ENCODE measurements at regions of chr2 and their contacts with region 1.

Region 1: GRCh38 chr2:70142590-70143313 is 48.1 kb downstream of the C2orf42 start:
- DNase-seq: peak; percentile 100
- H3K4me3 Mint-ChIP-seq: peak overlapping the region; percentile 93
- H3K27ac Mint-ChIP-seq: peak overlapping the region; percentile 99
- H3K4me1 Mint-ChIP-seq: peaks cover 53% of the 10 kb centered on the region
- H3K27me3 Mint-ChIP-seq: no peaks in the 10 kb centered on the region

Region 2: GRCh38 chr2:69601179-69601612 is 541.6 kb before region 1 on chr2:
- CTCF ChIA-PET with region 1: no interaction called
- intact Hi-C with region 1: no loop called
- DNase-seq: peak; percentile 24
- H3K4me3 Mint-ChIP-seq: no peak overlapping the region
- H3K27ac Mint-ChIP-seq: peak overlapping the region; percentile 79
- H3K4me1 Mint-ChIP-seq: peaks cover 92% of the 10 kb centered on the region
- H3K27me3 Mint-ChIP-seq: no peaks in the 10 kb centered on the region

Region 3: GRCh38 chr2:69724540-69725159 is 418.1 kb before region 1 on chr2:
- CTCF ChIA-PET with region 1: interaction called, 3 read pairs
- intact Hi-C with region 1: loop called (anchors 1 kb)
- DNase-seq: peak; percentile 95
- H3K4me3 Mint-ChIP-seq: peak overlapping the region; percentile 61
- H3K27ac Mint-ChIP-seq: no peak overlapping the region
- H3K4me1 Mint-ChIP-seq: no peaks in the 10 kb centered on the region
- H3K27me3 Mint-ChIP-seq: no peaks in the 10 kb centered on the region

Region 4: GRCh38 chr2:69914170-69914960 is 228.4 kb before region 1 on chr2:
- CTCF ChIA-PET with region 1: interaction called, 80 read pairs
- intact Hi-C with region 1: loop called (anchors 1 kb)
- DNase-seq: peak; percentile 100
- H3K4me3 Mint-ChIP-seq: peak overlapping the region; percentile 83
- H3K27ac Mint-ChIP-seq: peak overlapping the region; percentile 87
- H3K4me1 Mint-ChIP-seq: peaks cover 36% of the 10 kb centered on the region
- H3K27me3 Mint-ChIP-seq: no peaks in the 10 kb centered on the region

Region 5: GRCh38 chr2:70070541-70071268 is 72.0 kb before region 1 on chr2:
- CTCF ChIA-PET with region 1: interaction called, 14 read pairs
- intact Hi-C with region 1: loop called (anchors 1 kb)
- DNase-seq: peak; percentile 76
- H3K4me3 Mint-ChIP-seq: peak overlapping the region; percentile 54
- H3K27ac Mint-ChIP-seq: peak overlapping the region; percentile 94
- H3K4me1 Mint-ChIP-seq: peaks cover 57% of the 10 kb centered on the region
- H3K27me3 Mint-ChIP-seq: no peaks in the 10 kb centered on the region

Region 6: DNA sequence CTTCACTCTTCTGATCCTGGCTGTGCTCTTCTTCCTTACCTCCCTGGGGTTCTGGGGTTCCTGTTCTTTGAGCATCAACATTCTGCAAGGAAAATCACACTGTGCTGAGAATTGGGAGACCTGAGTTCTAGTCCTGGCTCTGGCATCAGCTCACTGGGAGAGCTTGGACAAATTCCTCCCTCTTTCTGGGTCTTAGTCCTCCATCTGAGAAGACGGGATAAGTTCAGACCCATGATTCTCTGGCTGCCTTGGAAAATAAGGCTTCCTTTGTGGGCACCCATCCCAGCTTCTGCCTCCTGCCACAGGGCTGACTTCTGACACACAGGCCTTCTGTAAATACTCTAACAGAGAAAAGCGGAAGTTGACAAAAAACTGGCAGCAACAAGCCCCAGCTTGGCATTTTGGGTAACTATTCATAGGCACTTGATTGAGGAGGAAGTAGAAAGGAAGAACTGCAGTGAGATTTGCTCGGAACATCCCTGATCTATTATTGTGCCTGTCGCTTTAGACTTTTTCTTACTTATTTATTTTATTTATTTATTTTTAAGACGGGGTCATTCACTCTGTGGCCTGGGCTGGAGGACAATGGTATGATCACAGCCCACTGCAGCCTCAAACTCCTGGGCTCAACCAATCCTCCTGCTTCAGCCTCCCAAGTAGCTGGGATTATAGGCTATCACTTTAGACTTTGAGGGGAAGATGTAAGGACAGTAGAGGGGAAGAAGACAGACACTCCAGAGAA is 47.6 kb before region 1 on chr2:
- CTCF ChIA-PET with region 1: interaction called, 12 read pairs
- intact Hi-C with region 1: no loop called
- DNase-seq: peak; percentile 75
- H3K4me3 Mint-ChIP-seq: peak overlapping the region; percentile 77
- H3K27ac Mint-ChIP-seq: peak overlapping the region; percentile 98
- H3K4me1 Mint-ChIP-seq: peaks cover 65% of the 10 kb centered on the region
- H3K27me3 Mint-ChIP-seq: no peaks in the 10 kb centered on the region

Region 7: DNA sequence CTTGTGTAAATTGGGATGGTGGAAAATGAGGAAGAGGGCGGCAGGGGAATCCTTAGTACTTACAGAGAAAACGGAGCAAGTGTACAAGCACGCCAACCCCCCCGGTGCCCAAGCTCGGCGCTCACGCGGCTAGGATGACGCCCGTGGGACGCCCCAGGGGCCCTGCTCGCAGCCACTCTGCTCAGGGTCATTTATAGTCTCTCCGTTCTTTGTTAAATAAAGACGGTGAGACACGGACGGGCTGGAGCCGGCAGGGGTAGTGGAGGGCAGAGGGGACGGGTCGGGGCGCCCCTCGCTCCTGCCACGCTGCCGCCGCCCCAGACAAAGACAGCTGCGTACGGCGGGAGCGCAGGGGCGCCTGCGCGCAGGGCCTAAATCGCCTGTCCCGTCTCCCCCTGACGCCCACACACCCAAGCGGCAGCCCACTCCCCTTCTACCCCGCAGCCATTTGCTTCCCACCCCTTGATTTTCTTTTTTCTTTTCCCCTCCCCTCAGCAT is 17.7 kb before region 1 on chr2:
- CTCF ChIA-PET with region 1: interaction called, 6 read pairs
- intact Hi-C with region 1: loop called (anchors 1 kb)
- DNase-seq: peak; percentile 58
- H3K4me3 Mint-ChIP-seq: peak overlapping the region; percentile 92
- H3K27ac Mint-ChIP-seq: peak overlapping the region; percentile 100
- H3K4me1 Mint-ChIP-seq: peaks cover 68% of the 10 kb centered on the region
- H3K27me3 Mint-ChIP-seq: no peaks in the 10 kb centered on the region

Region 8: DNA sequence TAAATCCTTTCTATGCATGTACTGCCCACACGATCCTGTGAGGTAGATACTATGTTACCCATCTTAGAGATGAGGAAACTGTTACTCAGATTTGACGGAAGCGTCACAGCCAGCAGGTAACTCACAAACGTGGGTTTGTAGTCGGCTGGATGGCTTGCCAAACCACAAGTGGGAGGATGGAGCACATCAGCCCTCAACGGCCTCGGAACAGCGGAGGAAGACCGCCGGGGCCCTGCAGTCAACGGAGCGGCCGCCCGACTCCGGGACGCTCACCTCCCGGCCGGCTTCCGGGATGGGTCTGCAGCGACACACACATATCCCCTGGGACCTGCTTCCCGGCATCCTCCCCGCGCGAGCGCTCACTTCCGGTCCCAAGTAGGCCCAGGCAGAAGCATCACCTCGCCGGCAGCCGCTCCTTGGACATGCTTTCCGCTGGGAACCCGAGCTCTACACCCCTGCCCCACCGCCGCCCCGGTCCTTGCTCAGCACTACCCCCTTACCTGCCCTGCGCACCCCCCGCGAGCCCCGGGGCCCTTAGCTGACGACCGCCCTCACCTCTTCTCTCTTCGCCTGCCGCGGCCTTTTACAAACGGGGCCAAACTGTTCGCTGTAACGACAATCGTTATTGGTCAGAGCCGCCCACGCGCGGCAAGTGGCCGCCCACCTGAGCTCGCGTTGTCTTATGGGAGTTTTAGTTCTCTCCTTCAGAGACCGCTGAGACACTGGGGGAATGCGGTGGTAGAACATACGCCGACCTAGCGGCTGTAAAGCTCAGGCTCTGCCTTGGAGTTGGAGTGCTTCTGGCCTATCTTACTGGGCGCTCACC is 47.9 kb after region 1 on chr2 and contains the start of gene C2orf42:
- CTCF ChIA-PET with region 1: no interaction called
- intact Hi-C with region 1: loop called (anchors 1 kb)
- DNase-seq: peak; percentile 98
- H3K4me3 Mint-ChIP-seq: peak within 1 kb of the TSS; percentile 87
- H3K27ac Mint-ChIP-seq: peak within 1 kb of the TSS; percentile 98
- H3K4me1 Mint-ChIP-seq: peaks cover 21% of the 10 kb centered on the region
- H3K27me3 Mint-ChIP-seq: no peaks in the 10 kb centered on the region
- total RNA-seq, gene C2orf42: 19.2 to 23.3 TPM